Aorta (tissue), 5 donors: ENCODE measurements at regions of chr4 and their contacts with region 1.

Region 1: DNA sequence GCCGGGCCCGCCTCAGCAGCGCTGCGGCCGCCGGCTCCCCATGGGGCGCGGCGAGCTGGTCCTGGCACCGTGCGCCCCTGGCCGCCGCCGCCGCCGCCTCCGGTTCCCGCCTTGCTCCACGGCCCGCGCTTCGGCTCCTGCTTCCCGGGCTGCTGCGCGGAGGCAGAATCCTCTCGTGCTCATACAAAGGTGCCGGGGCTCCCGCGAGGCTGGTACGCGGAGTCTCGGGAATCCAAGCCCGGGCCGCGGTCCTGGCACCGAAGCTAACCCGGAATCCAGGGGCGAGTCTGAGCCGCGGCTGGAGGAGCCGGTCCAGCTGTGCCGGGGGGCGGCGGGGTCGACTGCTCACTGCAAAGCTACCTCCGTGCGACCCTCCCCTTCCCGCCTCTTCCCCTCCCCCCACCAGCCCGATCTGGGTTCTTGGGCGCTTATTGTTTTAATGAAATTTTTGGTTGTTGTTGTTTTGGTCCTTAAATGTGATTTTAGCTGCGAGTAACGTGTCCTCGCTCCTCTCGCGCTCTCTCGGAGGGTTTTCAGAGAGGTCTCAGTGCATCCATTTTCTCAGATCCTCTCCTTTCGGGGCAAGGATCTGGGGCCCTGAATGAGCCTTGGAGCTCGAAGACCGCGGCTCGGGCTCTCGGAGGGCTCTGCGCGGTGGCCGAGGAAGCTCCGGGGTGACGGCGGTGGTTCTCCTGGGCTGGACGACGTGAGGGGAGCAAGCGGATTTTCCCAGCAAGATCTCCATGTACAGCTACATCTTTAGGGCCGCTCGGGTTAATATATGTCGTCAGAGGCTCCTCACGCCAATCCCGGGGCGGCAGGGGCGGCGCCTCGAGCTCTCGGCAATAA is at the start of gene HAND2:
- DNase-seq: peak; percentile 82 to 84
- ATAC-seq: peak; percentile 17
- H3K4me3 ChIP-seq: peak within 1 kb of the TSS; percentile 86 to 97
- H3K27ac ChIP-seq: peak within 1 kb of the TSS; percentile 95 to 99
- H3K4me1 ChIP-seq: no peaks in the 10 kb centered on the region
- H3K27me3 ChIP-seq: no peaks in the 10 kb centered on the region
- total RNA-seq, gene HAND2: 5.2 to 19.5 TPM

Region 2: GRCh38 chr4:173585876-173586572 is 56.3 kb after region 1 on chr4:
- intact Hi-C with region 1: loop called in 1 of 2 experiments (anchors 5 kb)
- DNase-seq: no peak
- ATAC-seq: no peak
- H3K4me3 ChIP-seq: no peak overlapping the region
- H3K27ac ChIP-seq: peak overlapping the region in 1 of 2 donors; percentile 40
- H3K4me1 ChIP-seq: peaks cover 0 to 4% of the 10 kb centered on the region in 2 donors
- H3K27me3 ChIP-seq: no peaks in the 10 kb centered on the region

Region 3: GRCh38 chr4:173752610-173753230 is 223.0 kb after region 1 on chr4:
- intact Hi-C with region 1: loop called in 1 of 2 experiments (anchors 5 kb)
- DNase-seq: peak in 1 of 2 donors; percentile 38
- ATAC-seq: no peak
- H3K4me3 ChIP-seq: no peak overlapping the region
- H3K27ac ChIP-seq: no peak overlapping the region
- H3K4me1 ChIP-seq: no peaks in the 10 kb centered on the region
- H3K27me3 ChIP-seq: no peaks in the 10 kb centered on the region